ENCODE measurements at regions of chr9 and their contacts with region 1.

Region 1: GRCh38 chr9:130770679-130771442 is 64.2 kb upstream of the ABL1 start:
- DNase-seq: peak in 9 of 42 donors; percentile 14 to 71 (median 33)

Region 2: DNA sequence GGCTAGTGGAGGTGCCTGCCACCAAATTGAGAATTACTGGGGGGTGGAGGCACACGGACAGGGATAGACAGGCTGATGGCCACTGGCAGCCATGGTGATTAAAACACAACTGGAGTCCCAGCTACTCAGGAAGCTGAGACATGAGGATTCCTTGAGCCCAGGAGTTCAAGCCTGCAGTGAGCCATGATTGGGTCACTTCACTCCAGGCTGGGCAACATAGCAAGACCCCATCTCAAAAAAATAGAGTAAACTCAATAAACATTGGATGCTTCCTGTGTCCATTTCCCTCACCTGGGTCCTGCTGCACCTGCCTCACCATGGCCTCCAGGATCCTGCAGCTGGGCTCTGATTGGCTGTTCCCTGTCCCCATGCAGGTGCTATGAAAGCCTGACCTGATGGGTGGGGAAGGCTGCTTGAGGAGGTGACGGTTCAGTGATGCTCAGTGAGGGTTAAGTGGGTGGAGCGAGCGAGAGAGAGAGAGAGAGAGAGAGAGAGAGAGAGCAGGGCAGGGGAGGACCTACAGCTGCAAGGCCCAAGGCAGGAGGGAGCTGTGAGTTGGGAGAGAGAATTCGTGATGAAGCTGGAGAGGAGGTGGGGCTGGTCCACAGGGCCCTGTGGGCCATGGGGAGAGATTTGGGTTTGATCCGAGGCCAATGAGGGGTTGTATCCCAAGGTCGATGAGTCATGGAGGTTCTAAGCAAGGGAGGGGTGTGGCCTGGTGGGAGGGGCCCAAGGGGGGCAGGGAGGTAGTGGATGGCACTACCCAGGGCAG is 228.2 kb before region 1 on chr9:
- intact Hi-C with region 1: no loop called
- DNase-seq: no peak

Region 3: DNA sequence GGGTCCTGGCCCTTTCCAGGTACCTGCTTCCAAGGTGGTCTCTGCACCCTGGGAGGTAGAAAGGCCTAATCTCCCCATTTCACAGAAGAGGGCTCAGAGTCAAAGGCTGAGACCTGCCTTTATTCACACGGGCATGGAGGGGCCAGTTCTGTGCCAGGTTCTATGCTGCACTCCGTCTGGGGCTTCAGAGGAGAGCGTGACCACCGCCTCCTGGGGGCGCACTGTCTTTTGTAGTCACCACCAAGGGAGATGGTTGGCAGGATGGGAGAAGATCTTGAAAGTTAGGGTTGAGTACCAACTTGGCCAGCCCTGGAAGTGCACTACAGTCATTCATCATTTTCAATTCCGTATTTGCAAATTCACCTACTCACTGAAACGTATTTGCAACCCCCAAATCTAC is 130.2 kb before region 1 on chr9:
- intact Hi-C with region 1: no loop called
- DNase-seq: no peak

Region 4: DNA sequence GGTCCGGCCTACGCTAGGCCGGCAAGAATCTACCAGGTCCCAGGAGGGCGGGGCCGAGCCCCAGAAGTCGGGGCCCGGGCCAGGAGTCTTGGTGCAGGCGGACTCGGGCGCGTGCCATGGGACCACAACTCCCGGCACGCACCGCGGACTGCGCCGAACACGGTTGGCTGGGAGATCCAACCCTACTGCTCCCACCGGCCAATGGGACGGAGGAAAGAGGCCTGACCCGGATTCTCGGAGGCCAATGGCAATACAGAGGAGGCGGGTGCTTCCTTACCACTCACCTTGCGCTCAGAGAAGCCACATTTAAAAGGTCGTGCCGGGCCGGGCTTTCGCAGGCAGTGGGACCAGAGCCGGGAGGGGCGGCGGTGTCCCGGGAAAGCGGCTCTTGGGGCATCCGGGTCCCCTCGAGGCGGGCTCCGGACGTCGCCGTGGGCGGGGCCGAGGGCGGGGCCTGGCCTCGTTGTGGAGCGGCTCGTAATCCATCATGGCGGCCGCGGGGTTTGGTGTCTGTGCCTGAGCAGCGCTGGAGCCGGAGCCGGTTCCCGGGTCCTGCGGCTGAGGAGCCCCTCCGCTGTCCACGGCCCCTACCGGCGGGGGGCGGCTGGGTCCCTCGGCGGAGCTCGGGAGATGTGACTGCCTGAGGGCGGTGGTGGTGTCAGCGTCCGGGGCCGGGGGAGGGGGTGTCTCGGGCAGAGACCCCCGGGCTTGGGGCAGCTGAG is 58.1 kb before region 1 on chr9:
- intact Hi-C with region 1: loop called (anchors 10 kb)
- DNase-seq: peak; percentile 96 to 100 (median 99)

Region 5: DNA sequence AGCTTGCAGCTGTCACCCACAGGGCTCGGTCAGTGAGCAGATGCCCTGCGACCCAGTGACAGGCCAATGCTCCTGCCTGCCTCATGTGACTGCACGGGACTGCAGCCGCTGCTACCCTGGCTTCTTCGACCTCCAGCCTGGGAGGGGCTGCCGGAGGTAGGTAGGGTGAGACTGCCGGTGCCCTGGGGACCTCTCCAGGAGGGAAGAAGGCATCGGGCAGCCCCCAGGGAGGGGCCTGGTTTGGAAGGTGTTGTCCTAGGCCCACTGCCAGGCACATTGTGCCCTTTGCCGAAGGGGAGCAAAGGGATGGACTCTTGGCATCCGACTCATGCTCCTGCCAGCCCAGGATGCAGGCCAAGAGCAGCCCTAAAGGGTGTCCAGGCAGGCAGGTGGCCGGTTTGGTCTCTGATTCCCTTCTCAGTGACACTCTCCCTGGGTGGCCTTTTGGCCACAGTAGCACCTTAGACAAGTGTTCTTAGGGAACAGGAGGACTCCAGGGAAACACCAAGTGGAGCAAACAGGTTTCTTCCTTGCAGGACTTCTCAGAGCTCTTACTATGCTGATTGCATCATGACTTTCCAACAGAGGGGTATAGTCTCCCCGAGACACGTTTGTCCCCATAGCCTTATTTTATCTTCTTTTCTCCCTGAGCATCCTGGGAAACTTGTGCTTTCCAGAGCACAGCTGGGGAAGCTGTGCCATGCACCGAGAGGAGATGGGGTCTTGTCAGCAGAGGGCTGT is 297.4 kb after region 1 on chr9:
- intact Hi-C with region 1: no loop called
- DNase-seq: no peak

Measured in head of caudate nucleus (tissue), 42 donors.